ENCODE measurements at regions of chr10 and their contacts with region 1.

Region 1: GRCh38 chr10:15097011-15097812 is at the start of gene RPP38:
- DNase-seq: peak; percentile 97
- H3K4me3 Mint-ChIP-seq: peak within 1 kb of the TSS; percentile 94
- H3K27ac Mint-ChIP-seq: peak within 1 kb of the TSS; percentile 94
- H3K4me1 Mint-ChIP-seq: peaks cover 29% of the 10 kb centered on the region
- H3K27me3 Mint-ChIP-seq: no peaks in the 10 kb centered on the region
- total RNA-seq, gene RPP38: 18.3 to 19.2 TPM

Region 2: GRCh38 chr10:14507176-14507575 is 590.0 kb before region 1 on chr10:
- CTCF ChIA-PET with region 1: no interaction called
- POLR2A ChIA-PET with region 1: no interaction called
- intact Hi-C with region 1: loop called (anchors 10 kb)
- DNase-seq: peak; percentile 72
- H3K4me3 Mint-ChIP-seq: no peak overlapping the region
- H3K27ac Mint-ChIP-seq: peak overlapping the region; percentile 53
- H3K4me1 Mint-ChIP-seq: peaks cover 37% of the 10 kb centered on the region
- H3K27me3 Mint-ChIP-seq: no peaks in the 10 kb centered on the region

Region 3: DNA sequence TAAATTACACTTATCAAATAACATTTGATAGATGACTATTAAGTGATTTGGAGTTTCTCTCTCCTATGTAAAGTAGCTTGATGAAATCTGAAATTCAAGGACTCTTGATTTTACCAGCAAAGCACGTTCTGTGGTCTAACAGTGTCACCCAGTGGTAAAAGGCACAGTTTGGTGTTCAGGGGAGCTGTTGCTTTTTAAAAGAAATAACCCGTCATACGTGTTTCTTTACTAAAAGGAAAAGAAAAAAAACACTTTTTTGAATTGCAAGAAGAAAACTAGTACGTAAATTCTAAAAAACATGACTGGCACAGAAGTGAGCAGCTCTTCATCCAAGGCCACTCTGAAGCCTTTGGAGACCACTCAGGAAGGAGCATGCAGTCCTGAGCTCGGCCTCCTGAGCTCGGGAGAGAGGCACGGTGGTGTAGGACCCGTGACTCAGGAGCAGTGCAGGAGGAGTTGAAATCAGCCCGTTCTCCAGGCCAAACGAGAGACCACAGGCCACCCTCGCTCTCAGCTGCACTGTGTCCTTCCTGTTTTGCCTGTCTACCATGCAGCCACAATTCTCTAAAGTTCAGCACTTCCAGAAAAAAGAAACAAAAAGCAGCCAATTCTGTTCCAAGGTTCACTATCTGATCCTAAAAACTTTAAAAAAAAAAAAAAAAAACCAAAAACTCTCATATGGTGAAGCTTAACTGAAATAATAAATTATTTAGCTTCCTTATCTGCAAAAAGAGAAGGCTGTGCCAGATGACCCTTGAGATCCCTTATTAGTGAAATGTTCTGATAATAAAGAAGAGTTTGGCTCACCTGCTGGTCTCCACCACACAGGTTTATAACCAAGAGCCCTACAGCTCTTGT is 553.9 kb before region 1 on chr10:
- CTCF ChIA-PET with region 1: no interaction called
- POLR2A ChIA-PET with region 1: no interaction called
- intact Hi-C with region 1: no loop called
- DNase-seq: peak; percentile 58
- H3K4me3 Mint-ChIP-seq: peak overlapping the region; percentile 52
- H3K27ac Mint-ChIP-seq: peak overlapping the region; percentile 91
- H3K4me1 Mint-ChIP-seq: peaks cover 81% of the 10 kb centered on the region
- H3K27me3 Mint-ChIP-seq: no peaks in the 10 kb centered on the region

Region 4: DNA sequence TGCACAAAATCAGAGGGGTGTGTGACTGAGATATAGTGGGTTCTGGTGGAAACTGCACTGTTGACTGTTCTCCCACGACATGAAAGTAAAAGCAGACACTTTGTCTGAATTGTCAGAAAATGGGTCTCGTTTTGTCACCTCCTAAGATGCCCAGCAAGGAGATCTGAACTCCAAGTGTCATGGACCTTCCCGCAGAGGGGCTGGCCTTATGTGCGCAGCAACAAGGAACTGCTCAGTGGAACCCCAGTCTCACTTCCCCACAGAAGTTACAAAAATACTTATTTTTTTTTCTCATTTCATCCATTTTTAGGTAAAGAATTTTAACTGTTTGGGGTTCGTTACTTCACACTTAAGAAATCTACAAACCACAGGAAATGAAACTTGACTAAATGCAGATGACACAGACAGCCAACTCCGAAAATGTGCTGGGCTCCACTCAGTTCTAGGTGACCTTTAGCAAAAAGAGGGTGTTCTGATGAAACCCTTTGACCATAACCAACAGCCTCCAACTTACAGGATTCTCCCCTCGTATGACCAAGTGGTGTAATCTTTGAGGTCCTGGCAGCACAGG is 437.5 kb before region 1 on chr10:
- CTCF ChIA-PET with region 1: no interaction called
- POLR2A ChIA-PET with region 1: no interaction called
- intact Hi-C with region 1: loop called (anchors 1 kb)
- DNase-seq: peak; percentile 72
- H3K4me3 Mint-ChIP-seq: peak overlapping the region; percentile 45
- H3K27ac Mint-ChIP-seq: peak overlapping the region; percentile 92
- H3K4me1 Mint-ChIP-seq: peaks cover 77% of the 10 kb centered on the region
- H3K27me3 Mint-ChIP-seq: no peaks in the 10 kb centered on the region

Region 5: GRCh38 chr10:14878266-14879054 is 218.8 kb before region 1 on chr10 and contains the start of gene SUV39H2:
- CTCF ChIA-PET with region 1: no interaction called
- POLR2A ChIA-PET with region 1: no interaction called
- intact Hi-C with region 1: loop called (anchors 1 kb)
- DNase-seq: peak; percentile 96
- H3K4me3 Mint-ChIP-seq: peak within 1 kb of the TSS; percentile 94
- H3K27ac Mint-ChIP-seq: peak within 1 kb of the TSS; percentile 80
- H3K4me1 Mint-ChIP-seq: peaks cover 41% of the 10 kb centered on the region
- H3K27me3 Mint-ChIP-seq: no peaks in the 10 kb centered on the region
- total RNA-seq, gene SUV39H2: 38.7 to 39.8 TPM

Region 6: GRCh38 chr10:14954001-14954770 is 143.0 kb before region 1 on chr10 and contains the start of gene DCLRE1C:
- CTCF ChIA-PET with region 1: no interaction called
- POLR2A ChIA-PET with region 1: no interaction called
- intact Hi-C with region 1: loop called (anchors 1 kb)
- DNase-seq: peak; percentile 93
- H3K4me3 Mint-ChIP-seq: peak within 1 kb of the TSS; percentile 91
- H3K27ac Mint-ChIP-seq: peak within 1 kb of the TSS; percentile 96
- H3K4me1 Mint-ChIP-seq: peaks cover 47% of the 10 kb centered on the region
- H3K27me3 Mint-ChIP-seq: no peaks in the 10 kb centered on the region
- total RNA-seq, gene DCLRE1C: 17.2 to 18.3 TPM

Region 7: DNA sequence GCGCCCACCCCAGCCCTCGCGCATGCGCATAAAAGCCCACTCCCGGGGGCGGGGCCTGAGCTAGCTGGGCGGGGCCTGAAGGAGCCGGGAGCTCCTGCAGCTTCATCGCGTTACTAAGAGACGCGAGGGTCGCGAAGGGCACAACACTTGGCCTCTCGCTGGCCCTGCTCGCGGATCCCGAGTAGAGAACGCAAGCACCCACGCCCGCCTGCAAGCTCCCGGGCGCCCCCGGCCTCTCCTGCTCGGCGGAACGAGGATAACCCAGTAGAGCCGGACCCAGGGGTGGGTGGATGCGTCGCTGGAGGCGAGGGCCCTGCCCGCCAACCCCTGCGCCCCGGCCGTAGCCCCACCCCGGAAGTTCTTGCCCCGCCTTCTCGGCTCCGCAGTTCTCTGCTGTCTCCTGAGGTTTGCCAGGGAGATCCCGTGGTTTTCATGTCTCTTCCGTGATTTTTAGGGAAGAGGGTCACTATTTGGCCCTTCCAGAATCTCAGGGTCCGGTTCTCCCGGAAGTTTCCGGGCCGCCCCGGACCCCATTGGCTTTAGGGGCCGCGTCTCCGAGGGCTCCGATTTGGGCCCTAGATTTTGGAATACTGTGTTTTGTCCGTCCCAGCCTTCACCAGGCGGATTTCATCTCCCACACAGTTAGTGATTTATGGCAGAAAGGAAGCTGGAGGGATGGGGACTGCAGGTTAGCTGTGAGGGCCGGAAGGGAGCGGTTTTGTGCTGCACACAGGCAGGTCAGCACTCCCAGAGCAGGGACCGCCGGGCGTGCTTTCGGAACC is 137.7 kb before region 1 on chr10 and contains the start of gene MEIG1:
- CTCF ChIA-PET with region 1: interaction called, 3 read pairs
- POLR2A ChIA-PET with region 1: no interaction called
- intact Hi-C with region 1: loop called (anchors 1 kb)
- DNase-seq: peak; percentile 95
- H3K4me3 Mint-ChIP-seq: peak within 1 kb of the TSS; percentile 88
- H3K27ac Mint-ChIP-seq: peak within 1 kb of the TSS; percentile 95
- H3K4me1 Mint-ChIP-seq: peaks cover 24% of the 10 kb centered on the region
- H3K27me3 Mint-ChIP-seq: no peaks in the 10 kb centered on the region
- total RNA-seq, gene MEIG1: 0.95 to 1.4 TPM